ENCODE measurements at regions of chr14 and their contacts with region 1.

Region 1: GRCh38 chr14:92603309-92604242 is 90.0 kb downstream of the RIN3 start:
- DNase-seq: peak; percentile 68
- ATAC-seq: peak; percentile 33
- H3K4me3 ChIP-seq: no peak overlapping the region
- H3K27ac ChIP-seq: no peak overlapping the region
- H3K4me1 ChIP-seq: peaks cover 47% of the 10 kb centered on the region
- H3K27me3 ChIP-seq: no peaks in the 10 kb centered on the region
- CTCF ChIP-seq: peak; percentile 68

Region 2: DNA sequence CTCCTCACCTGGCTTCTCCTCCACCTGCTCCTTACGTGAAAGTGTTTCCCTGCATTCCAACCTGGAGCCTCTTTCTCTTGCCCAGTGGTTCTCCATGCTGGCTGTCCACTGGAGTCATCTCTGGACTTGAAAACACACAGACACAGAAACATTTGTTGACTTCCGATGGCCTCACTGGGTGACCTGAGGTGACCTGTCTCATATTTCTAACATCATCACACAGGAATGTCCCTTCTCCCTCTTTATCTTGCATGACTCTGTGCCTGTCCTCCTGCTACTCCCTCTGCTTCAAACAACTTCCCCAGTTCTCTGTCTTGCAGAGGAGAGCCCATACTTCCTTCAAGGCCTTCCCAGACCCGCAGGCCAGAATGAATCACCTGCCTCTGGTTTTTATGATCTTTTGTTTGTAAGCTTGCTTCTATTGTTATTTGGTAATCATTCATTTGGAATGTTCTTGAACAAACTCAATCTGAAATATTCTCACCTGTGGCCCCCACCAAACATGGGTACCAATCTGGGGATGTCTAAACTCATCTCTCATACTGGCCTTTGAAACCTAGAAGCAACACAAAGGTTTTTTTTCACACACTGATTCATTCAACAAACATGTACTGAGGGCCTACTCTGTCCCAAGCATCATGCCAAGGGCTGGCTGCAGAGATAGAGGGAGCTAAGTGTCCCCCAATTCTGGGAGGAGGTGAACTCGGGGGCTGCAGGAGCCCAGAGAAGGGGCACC is 99.7 kb before region 1 on chr14:
- CTCF ChIA-PET with region 1: no interaction called
- POLR2A ChIA-PET with region 1: no interaction called
- intact Hi-C with region 1: loop called (anchors 5 kb)
- DNase-seq: peak; percentile 95
- ATAC-seq: peak; percentile 93
- H3K4me3 ChIP-seq: no peak overlapping the region
- H3K27ac ChIP-seq: peak overlapping the region; percentile 69
- H3K4me1 ChIP-seq: peaks cover 61% of the 10 kb centered on the region
- H3K27me3 ChIP-seq: no peaks in the 10 kb centered on the region
- CTCF ChIP-seq: no peak

Region 3: GRCh38 chr14:92625213-92625612 is 21.6 kb after region 1 on chr14:
- CTCF ChIA-PET with region 1: interaction called, 3 read pairs
- POLR2A ChIA-PET with region 1: no interaction called
- intact Hi-C with region 1: loop called (anchors 1 kb)
- DNase-seq: peak; percentile 95
- ATAC-seq: peak; percentile 94
- H3K4me3 ChIP-seq: no peak overlapping the region
- H3K27ac ChIP-seq: peak overlapping the region; percentile 95
- H3K4me1 ChIP-seq: peaks cover 24% of the 10 kb centered on the region
- H3K27me3 ChIP-seq: no peaks in the 10 kb centered on the region
- CTCF ChIP-seq: no peak

Region 4: GRCh38 chr14:92680781-92681650 is 77.4 kb after region 1 on chr14:
- CTCF ChIA-PET with region 1: no interaction called
- POLR2A ChIA-PET with region 1: interaction called, 3 read pairs
- intact Hi-C with region 1: loop called (anchors 1 kb)
- DNase-seq: peak; percentile 92
- ATAC-seq: peak; percentile 93
- H3K4me3 ChIP-seq: no peak overlapping the region
- H3K27ac ChIP-seq: peak overlapping the region; percentile 82
- H3K4me1 ChIP-seq: peaks cover 12% of the 10 kb centered on the region
- H3K27me3 ChIP-seq: no peaks in the 10 kb centered on the region
- CTCF ChIP-seq: peak; percentile 94

Region 5: DNA sequence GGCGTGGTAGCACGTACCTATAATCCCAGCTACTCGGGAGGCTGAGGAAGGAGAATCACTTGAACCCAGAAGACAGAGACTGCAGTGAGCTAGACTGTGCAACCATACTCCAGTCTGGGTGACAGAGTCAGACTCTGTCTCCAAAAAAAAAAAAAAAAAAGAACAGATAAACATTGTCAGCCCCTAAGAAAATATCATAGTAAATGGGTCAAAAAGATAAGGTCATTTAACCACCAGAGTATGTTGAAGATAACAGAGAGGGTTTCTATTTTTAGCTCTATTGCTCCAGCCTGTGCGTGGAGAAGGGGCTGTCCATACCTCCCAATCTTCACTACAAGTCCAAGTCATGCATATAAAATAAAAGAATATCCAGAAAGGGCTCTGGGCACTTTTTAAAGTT is 129.4 kb after region 1 on chr14:
- CTCF ChIA-PET with region 1: no interaction called
- POLR2A ChIA-PET with region 1: no interaction called
- intact Hi-C with region 1: no loop called
- DNase-seq: no peak
- ATAC-seq: no peak
- H3K4me3 ChIP-seq: no peak overlapping the region
- H3K27ac ChIP-seq: no peak overlapping the region
- H3K4me1 ChIP-seq: peaks cover 28% of the 10 kb centered on the region
- H3K27me3 ChIP-seq: no peaks in the 10 kb centered on the region
- CTCF ChIP-seq: no peak

Measured in PC-3 (cell line).